OCI-LY7 (cell line): ENCODE measurements at regions of chr10 and their contacts with region 1.

Region 1: DNA sequence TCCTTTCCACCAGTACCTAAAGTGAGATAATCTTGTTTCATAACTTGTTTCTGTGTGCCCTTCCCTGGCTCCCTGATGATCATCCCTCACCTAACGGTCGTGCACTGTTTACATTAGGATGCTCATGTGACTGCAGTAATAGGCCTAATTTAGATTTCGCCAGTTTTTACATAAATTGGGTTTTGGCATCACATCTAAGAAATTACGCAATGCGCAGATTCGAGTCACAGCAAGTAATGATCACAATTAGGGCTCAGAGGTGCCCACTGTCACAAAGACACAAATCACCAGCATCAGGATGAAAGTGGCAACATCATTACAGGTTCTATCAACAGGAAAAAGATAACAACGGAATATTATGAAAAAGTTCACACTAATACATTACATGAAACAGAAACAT is 94.7 kb downstream of the LARP4B start:
- DNase-seq: no peak
- H3K4me3 ChIP-seq: no peak overlapping the region
- H3K27ac ChIP-seq: no peak overlapping the region
- H3K4me1 ChIP-seq: no peaks in the 10 kb centered on the region
- CTCF ChIP-seq: no peak

Region 2: DNA sequence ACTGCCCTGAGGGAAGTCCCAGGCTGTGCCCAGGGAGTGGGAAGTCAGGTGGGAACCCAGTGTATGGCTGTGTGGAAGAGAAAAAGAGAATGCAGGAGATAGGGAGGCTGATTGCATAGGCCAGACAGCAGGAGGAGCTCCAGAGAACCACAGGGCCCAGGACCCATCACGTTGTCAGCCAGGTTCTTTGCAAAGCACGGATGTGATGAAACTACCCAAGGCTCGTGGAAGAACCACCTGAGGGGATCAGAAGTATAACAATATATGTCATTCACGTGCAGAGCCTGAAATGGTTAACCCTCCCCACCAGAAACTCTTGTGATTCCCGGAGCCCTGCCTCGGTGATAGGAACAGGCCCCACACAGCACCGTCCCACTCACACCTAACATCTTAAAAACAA is 11.1 kb after region 1 on chr10:
- CTCF ChIA-PET with region 1: no interaction called
- POLR2A ChIA-PET with region 1: interaction called, 3 read pairs
- intact Hi-C with region 1: loop called (anchors 2 kb)
- DNase-seq: no peak
- H3K4me3 ChIP-seq: no peak overlapping the region
- H3K27ac ChIP-seq: no peak overlapping the region
- H3K4me1 ChIP-seq: peaks cover 17% of the 10 kb centered on the region
- CTCF ChIP-seq: peak; percentile 21; the same call in 1 of the 2 replicates